ENCODE measurements at regions of chr15 and their contacts with region 1.

Region 1: GRCh38 chr15:94655249-94655880 is 424.0 kb downstream of the MCTP2 start:
- DNase-seq: no peak
- H3K4me3 ChIP-seq: no peak overlapping the region
- H3K27ac ChIP-seq: no peak overlapping the region
- H3K27me3 ChIP-seq: no peaks in the 10 kb centered on the region
- CTCF ChIP-seq: no peak

Region 2: DNA sequence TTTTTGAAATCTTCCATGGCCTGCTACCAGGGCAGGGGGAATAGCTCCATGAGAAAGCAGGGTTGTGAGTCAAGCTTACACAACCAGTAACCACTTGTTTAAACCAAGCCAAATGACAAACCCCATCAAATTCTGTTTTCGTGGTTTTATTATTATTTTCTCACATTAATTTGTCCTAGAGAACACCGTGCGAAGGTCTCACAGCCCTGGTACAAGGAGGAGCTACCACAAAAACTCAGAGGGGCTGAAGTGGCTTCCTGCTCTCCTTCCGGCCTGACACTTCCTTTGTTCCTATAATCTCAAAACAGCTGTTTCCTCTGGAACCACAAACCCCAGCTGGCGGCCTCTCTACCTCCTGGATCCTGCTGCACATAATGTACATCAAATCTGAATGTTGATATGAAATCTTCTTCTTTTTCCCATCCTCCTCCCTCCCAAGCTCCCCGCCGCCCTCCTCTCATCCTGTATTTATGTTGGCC is 48.1 kb before region 1 on chr15:
- CTCF ChIA-PET with region 1: interaction called, 10 read pairs
- POLR2A ChIA-PET with region 1: no interaction called
- DNase-seq: no peak
- H3K4me3 ChIP-seq: no peak overlapping the region
- H3K27ac ChIP-seq: no peak overlapping the region
- H3K27me3 ChIP-seq: no peaks in the 10 kb centered on the region
- CTCF ChIP-seq: no peak

Region 3: DNA sequence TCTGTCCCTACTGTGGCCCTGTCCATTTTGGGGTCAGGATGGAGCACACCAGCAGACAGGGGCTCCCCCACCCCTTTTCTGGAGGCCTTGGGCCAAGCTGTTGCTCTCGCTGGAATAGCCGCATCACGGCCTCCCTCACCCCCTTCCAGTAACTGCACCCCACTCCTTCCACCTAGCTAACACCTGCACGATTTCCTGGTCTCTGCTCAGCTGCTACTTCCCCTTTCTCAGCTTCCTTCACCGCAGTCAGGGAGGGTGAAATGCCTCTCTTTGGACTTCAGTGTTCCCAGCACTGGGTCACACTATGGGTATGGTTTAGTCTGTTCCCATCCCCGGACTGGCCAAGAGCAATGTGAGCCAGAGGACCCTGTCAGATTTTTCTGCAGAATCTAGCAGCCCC is 23.8 kb before region 1 on chr15:
- CTCF ChIA-PET with region 1: no interaction called
- POLR2A ChIA-PET with region 1: no interaction called
- DNase-seq: no peak
- H3K4me3 ChIP-seq: no peak overlapping the region
- H3K27ac ChIP-seq: no peak overlapping the region
- H3K27me3 ChIP-seq: no peaks in the 10 kb centered on the region
- CTCF ChIP-seq: no peak